MCF 10A (cell line): ENCODE measurements at regions of chr9 and their contacts with region 1.

Region 1: DNA sequence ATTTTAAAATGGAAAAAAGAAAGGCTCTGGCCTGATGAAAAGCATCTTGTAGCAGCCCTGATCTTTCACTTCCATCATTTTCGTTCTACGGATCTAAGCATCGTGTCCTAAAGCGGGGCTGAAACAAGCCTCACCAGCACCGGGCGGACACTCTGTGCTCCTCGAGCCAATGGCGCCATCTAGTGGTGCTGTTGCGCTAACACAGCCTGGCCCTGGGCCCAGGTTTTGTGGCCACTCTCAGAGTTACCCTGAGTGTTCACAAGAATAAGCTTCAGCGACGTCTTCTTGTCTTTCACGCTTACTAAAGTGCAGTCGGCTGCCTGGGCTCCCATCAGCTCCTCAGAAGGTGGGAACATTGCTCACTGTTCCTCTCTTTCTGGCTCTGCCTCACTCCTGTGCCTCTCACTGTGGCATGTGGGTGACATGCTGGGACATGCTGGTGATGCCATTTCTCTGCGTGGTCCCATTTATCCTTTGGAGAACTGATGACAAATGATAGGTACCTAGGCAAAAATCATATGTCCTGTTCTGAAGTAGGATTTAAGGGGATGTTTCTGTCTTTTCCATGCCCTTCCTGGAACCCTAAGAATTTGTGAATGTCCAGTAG is 32.7 kb downstream of the DMRT3 start:
- DNase-seq: peak; percentile 87
- H3K4me3 Mint-ChIP-seq: no peak overlapping the region
- H3K27ac Mint-ChIP-seq: peak overlapping the region; percentile 67
- H3K4me1 Mint-ChIP-seq: peaks cover 14% of the 10 kb centered on the region
- H3K27me3 Mint-ChIP-seq: no peaks in the 10 kb centered on the region
- CTCF ChIP-seq: peak; percentile 97

Region 2: GRCh38 chr9:385818-386398 is 623.3 kb before region 1 on chr9:
- CTCF ChIA-PET with region 1: interaction called, 4 read pairs
- POLR2A ChIA-PET with region 1: no interaction called
- intact Hi-C with region 1: loop called (anchors 5 kb)
- DNase-seq: peak; percentile 80
- H3K4me3 Mint-ChIP-seq: no peak overlapping the region
- H3K27ac Mint-ChIP-seq: no peak overlapping the region
- H3K4me1 Mint-ChIP-seq: peaks cover 6% of the 10 kb centered on the region
- H3K27me3 Mint-ChIP-seq: no peaks in the 10 kb centered on the region
- CTCF ChIP-seq: peak; percentile 91

Region 3: DNA sequence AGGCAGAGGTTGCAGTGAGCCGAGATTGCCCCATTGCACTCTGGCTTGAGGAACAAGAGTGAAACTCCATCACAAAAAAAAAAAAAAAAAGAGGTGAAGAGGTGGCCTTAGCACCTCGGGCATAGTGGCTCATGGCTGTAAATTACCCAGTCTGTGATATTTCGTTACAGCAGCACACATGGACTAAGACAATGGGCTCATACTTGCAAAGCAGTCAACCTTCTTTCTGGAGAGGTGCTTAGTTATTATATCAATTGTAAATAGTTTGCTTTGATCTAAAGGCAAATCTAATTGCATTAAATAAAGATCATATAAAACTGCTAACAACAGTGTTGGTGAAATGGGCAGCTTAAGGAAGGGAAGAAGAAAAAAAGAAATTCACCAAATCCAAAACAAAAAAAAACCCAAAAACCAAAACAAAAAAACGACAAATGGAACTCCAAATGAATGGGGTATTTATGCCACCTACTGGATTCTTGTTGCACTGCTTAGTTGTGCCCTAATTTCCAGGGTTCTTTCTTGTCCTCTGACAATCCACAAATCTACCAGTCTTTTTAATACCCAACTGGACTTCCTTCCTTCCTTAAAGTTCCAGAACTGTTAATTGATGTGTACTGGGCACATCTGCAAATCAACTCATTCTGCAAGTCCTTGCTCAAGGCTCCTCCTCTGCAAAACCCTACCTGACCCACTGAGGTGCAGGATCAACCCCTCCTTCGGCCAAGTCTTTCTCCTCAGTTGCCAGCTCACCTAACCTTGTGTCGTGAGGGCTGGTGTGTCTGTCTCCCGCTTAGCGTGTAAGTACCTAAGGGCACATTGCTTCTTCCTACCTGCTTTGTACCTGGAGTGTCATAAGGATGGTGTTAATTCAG is 202.7 kb before region 1 on chr9:
- CTCF ChIA-PET with region 1: interaction called, 7 read pairs
- POLR2A ChIA-PET with region 1: no interaction called
- intact Hi-C with region 1: loop called (anchors 5 kb)
- DNase-seq: peak; percentile 60
- H3K4me3 Mint-ChIP-seq: no peak overlapping the region
- H3K27ac Mint-ChIP-seq: no peak overlapping the region
- H3K4me1 Mint-ChIP-seq: peaks cover 18% of the 10 kb centered on the region
- H3K27me3 Mint-ChIP-seq: no peaks in the 10 kb centered on the region
- CTCF ChIP-seq: peak; percentile 79

Region 4: GRCh38 chr9:903923-904322 is 105.3 kb before region 1 on chr9:
- CTCF ChIA-PET with region 1: interaction called, 183 read pairs
- POLR2A ChIA-PET with region 1: no interaction called
- intact Hi-C with region 1: no loop called
- DNase-seq: no peak
- H3K4me3 Mint-ChIP-seq: no peak overlapping the region
- H3K27ac Mint-ChIP-seq: no peak overlapping the region
- H3K4me1 Mint-ChIP-seq: no peaks in the 10 kb centered on the region
- H3K27me3 Mint-ChIP-seq: peaks cover 52% of the 10 kb centered on the region
- CTCF ChIP-seq: no peak

Region 5: DNA sequence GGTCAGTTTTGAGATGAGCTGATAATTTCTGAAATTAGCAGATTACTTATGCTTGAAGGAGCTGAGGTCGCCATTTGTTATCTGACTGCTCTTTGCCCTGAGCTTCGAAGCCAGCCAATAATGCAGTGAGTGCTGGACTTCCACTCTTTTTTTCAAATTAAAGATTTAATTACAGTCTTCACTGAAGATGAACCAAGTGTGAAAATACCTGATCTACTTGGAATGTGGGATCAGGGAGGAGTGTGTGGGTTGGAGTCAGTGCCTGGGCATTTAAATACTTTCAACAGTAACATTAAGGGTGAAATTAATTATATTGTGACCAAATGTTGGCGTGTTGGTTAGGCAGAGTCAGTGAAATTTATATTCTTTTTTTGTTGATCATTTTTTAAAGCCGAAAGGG is 56.7 kb before region 1 on chr9:
- CTCF ChIA-PET with region 1: no interaction called
- POLR2A ChIA-PET with region 1: no interaction called
- intact Hi-C with region 1: no loop called
- DNase-seq: no peak
- H3K4me3 Mint-ChIP-seq: no peak overlapping the region
- H3K27ac Mint-ChIP-seq: no peak overlapping the region
- H3K4me1 Mint-ChIP-seq: no peaks in the 10 kb centered on the region
- H3K27me3 Mint-ChIP-seq: no peaks in the 10 kb centered on the region
- CTCF ChIP-seq: no peak

Region 6: DNA sequence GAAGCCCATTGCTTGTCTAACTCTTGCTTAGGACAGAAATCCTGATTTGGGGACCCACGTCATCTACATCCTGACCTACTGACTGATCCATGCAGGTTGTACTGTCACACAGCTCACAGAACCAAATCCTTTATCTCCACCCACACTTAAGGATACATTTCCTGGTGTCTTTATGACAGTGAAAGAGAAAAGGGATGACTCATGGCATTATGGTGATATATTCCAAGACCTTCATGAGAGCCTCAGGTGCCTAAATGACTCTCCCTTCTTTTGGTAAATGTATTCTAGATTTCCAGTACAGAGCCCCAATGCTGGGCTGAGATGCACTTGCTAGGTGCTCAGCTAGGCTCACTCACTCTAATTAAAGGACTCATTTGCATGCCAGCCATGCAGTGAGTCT is 14.9 kb after region 1 on chr9:
- CTCF ChIA-PET with region 1: interaction called, 15 read pairs
- POLR2A ChIA-PET with region 1: no interaction called
- intact Hi-C with region 1: no loop called
- DNase-seq: no peak
- H3K4me3 Mint-ChIP-seq: no peak overlapping the region
- H3K27ac Mint-ChIP-seq: no peak overlapping the region
- H3K4me1 Mint-ChIP-seq: no peaks in the 10 kb centered on the region
- H3K27me3 Mint-ChIP-seq: peaks cover 22% of the 10 kb centered on the region
- CTCF ChIP-seq: no peak

Region 7: DNA sequence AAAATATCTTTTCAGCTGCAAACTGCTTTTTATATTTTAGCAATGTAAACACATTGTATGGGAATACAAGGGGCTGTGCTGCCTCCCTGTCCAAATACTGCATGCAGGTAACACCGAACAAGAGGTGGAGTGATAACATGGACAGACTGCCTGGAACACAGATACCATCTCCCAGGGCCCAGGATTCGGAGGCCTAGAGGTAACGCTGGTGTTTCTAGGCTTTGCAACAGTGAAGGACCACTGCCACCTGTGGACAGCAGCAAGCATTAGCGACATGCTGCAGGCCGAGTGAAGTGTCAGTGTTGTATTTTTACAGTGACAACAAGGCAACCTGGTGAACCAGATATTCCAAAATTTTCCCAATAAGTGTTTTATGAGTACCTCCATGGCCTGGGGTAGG is 420.1 kb after region 1 on chr9:
- CTCF ChIA-PET with region 1: interaction called, 4 read pairs
- POLR2A ChIA-PET with region 1: interaction called, 3 read pairs
- intact Hi-C with region 1: loop called (anchors 2 kb)
- DNase-seq: peak; percentile 40
- H3K4me3 Mint-ChIP-seq: no peak overlapping the region
- H3K27ac Mint-ChIP-seq: no peak overlapping the region
- H3K4me1 Mint-ChIP-seq: no peaks in the 10 kb centered on the region
- H3K27me3 Mint-ChIP-seq: no peaks in the 10 kb centered on the region
- CTCF ChIP-seq: peak; percentile 54

Region 8: DNA sequence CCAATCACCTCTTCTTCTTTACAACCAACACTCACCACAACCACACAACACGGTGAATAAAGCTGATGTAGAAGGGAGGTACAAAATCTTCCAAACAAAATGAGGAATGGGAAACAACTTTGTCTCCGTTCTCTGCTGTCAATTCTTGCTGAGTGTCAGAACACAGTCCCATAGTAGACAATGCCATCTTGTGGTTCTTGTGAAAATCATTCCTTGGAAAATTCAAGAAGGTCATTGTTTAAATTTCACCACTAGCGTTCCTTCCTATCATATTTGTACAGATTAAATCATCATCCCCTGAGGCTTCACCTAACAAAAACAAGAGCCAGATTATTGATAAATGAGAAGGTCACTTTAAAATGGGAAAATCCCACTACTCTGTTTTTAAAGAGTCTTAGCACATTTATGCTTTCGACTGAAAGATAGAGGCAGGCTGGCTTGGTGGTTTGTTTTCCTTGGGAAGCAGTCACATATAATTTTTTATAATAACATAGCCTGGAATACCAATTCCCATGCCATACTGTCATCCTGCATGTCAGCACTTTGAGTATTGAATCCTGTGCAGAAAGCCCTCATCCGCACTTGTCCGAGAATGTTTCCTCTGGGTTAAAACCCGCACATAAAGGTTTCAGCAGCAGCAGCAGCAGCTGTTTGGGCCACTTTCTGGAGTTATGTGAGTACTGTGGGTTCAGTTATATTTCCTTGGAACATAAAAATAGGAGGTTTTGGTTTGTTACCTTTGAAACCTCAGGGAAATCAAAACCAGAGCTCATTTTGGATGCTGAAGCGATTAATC is 610.9 kb after region 1 on chr9:
- CTCF ChIA-PET with region 1: interaction called, 24 read pairs
- POLR2A ChIA-PET with region 1: no interaction called
- intact Hi-C with region 1: loop called (anchors 5 kb)
- DNase-seq: peak; percentile 32
- H3K4me3 Mint-ChIP-seq: peak overlapping the region; percentile 24
- H3K27ac Mint-ChIP-seq: peak overlapping the region; percentile 60
- H3K4me1 Mint-ChIP-seq: peaks cover 5% of the 10 kb centered on the region
- H3K27me3 Mint-ChIP-seq: peaks cover 50% of the 10 kb centered on the region
- CTCF ChIP-seq: peak; percentile 33